ENCODE measurements at regions of chr4 and their contacts with region 1.

Region 1: DNA sequence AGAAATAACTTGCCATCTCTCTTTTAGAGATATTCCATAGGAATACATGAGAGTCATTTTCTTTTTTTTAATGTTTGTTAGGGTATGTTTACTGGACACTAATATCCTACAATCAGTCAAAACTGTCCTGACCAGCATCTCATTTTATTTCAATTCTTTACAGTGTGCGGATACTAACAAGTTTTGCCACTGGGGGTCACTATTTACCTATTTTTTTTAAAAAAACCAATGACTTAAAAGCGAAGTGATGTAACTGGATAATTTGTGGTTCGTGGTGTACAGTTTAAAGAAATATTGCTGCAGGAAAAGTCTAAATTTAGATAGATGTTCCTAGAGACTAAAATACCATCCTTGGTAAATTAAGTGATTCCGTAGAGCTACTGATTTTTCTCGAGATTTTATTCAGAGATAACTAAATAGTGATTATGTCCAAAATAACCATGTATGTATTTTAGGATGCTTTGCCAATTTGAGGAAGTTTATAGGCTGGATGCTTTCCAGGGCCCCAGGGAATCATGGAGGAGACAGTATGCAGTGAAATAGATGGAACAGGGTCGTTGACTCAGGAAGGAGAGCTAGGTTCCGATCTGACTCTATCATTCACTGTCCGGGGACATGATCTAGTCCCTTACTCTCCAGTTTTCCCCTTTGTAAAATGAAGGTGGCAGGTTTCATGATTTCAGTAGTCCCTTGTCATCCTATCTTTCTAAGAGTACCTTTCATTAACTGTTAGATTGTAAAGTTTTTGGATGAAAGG is 34.0 kb upstream of the GNPDA2 start:
- DNase-seq: no peak
- ATAC-seq: peak; percentile 28 to 81 (median 65)
- H3K4me3 ChIP-seq: no peak overlapping the region
- H3K27ac ChIP-seq: no peak overlapping the region
- H3K4me1 ChIP-seq: peaks cover 0 to 5% (median 0%) of the 10 kb centered on the region in 9 donors
- H3K27me3 ChIP-seq: peaks cover 0 to 8% (median 0%) of the 10 kb centered on the region in 7 donors
- CTCF ChIP-seq: peak; percentile 25 to 66 (median 52)

Region 2: GRCh38 chr4:44118971-44119680 is 641.2 kb before region 1 on chr4:
- intact Hi-C with region 1: no loop called
- DNase-seq: no peak
- ATAC-seq: no peak
- H3K4me3 ChIP-seq: no peak overlapping the region
- H3K27ac ChIP-seq: no peak overlapping the region
- H3K4me1 ChIP-seq: no peaks in the 10 kb centered on the region
- H3K27me3 ChIP-seq: no peaks in the 10 kb centered on the region
- CTCF ChIP-seq: no peak

Region 3: GRCh38 chr4:44916411-44916810 is 156.1 kb after region 1 on chr4:
- intact Hi-C with region 1: loop called in 4 of 10 experiments (anchors 5 to 10 kb)
- DNase-seq: no peak
- ATAC-seq: no peak
- H3K4me3 ChIP-seq: peak overlapping the region in 6 of 10 donors; percentile 6 to 36 (median 26)
- H3K27ac ChIP-seq: peak overlapping the region in 1 of 10 donors; percentile 16
- H3K4me1 ChIP-seq: no peaks in the 10 kb centered on the region
- H3K27me3 ChIP-seq: no peaks in the 10 kb centered on the region
- CTCF ChIP-seq: no peak

Region 4: GRCh38 chr4:44927399-44928380 is 167.4 kb after region 1 on chr4:
- intact Hi-C with region 1: loop called in 5 of 10 experiments (anchors 5 to 10 kb)
- DNase-seq: no peak
- ATAC-seq: peak in 1 of 8 donors; percentile 20
- H3K4me3 ChIP-seq: no peak overlapping the region
- H3K27ac ChIP-seq: no peak overlapping the region
- H3K4me1 ChIP-seq: peaks cover 0 to 14% (median 0%) of the 10 kb centered on the region in 9 donors
- H3K27me3 ChIP-seq: no peaks in the 10 kb centered on the region
- CTCF ChIP-seq: peak; percentile 18 to 71 (median 47)

Region 5: GRCh38 chr4:45120163-45120562 is 359.8 kb after region 1 on chr4:
- intact Hi-C with region 1: loop called in 1 of 10 experiments (anchors 10 kb)
- DNase-seq: peak in 1 of 2 donors; percentile 6
- ATAC-seq: peak; percentile 34 to 98 (median 96)
- H3K4me3 ChIP-seq: no peak overlapping the region
- H3K27ac ChIP-seq: peak overlapping the region in 7 of 10 donors; percentile 2 to 59 (median 43)
- H3K4me1 ChIP-seq: peaks cover 0 to 9% (median 0%) of the 10 kb centered on the region in 9 donors
- H3K27me3 ChIP-seq: no peaks in the 10 kb centered on the region
- CTCF ChIP-seq: no peak

Region 6: GRCh38 chr4:45442466-45442865 is 682.1 kb after region 1 on chr4:
- intact Hi-C with region 1: loop called in 4 of 10 experiments (anchors 5 to 10 kb)
- DNase-seq: no peak
- ATAC-seq: peak in 3 of 8 donors; percentile 48 to 66 (median 61)
- H3K4me3 ChIP-seq: no peak overlapping the region
- H3K27ac ChIP-seq: no peak overlapping the region
- H3K4me1 ChIP-seq: peaks cover 0 to 6% (median 0%) of the 10 kb centered on the region in 9 donors
- H3K27me3 ChIP-seq: no peaks in the 10 kb centered on the region
- CTCF ChIP-seq: peak in 8 of 9 donors; percentile 8 to 47 (median 32)

Region 7: GRCh38 chr4:45453258-45453853 is 693.0 kb after region 1 on chr4:
- intact Hi-C with region 1: loop called in 2 of 10 experiments (anchors 5 to 10 kb)
- DNase-seq: no peak
- ATAC-seq: peak in 4 of 8 donors; percentile 50 to 80 (median 60)
- H3K4me3 ChIP-seq: no peak overlapping the region
- H3K27ac ChIP-seq: no peak overlapping the region
- H3K4me1 ChIP-seq: no peaks in the 10 kb centered on the region
- H3K27me3 ChIP-seq: no peaks in the 10 kb centered on the region
- CTCF ChIP-seq: peak in 8 of 9 donors; percentile 9 to 59 (median 48)

Region 8: GRCh38 chr4:46270986-46271596 is 1510.8 kb after region 1 on chr4:
- intact Hi-C with region 1: loop called in 7 of 10 experiments (anchors 5 to 10 kb)
- DNase-seq: no peak
- ATAC-seq: no peak
- H3K4me3 ChIP-seq: no peak overlapping the region
- H3K27ac ChIP-seq: no peak overlapping the region
- H3K4me1 ChIP-seq: no peaks in the 10 kb centered on the region
- H3K27me3 ChIP-seq: no peaks in the 10 kb centered on the region
- CTCF ChIP-seq: peak in 8 of 9 donors; percentile 5 to 56 (median 44)

Measured in heart right ventricle (tissue), 16 donors.